Vagina (tissue), 2 donors: ENCODE measurements at regions of chr22 and their contacts with region 1.

Region 1: DNA sequence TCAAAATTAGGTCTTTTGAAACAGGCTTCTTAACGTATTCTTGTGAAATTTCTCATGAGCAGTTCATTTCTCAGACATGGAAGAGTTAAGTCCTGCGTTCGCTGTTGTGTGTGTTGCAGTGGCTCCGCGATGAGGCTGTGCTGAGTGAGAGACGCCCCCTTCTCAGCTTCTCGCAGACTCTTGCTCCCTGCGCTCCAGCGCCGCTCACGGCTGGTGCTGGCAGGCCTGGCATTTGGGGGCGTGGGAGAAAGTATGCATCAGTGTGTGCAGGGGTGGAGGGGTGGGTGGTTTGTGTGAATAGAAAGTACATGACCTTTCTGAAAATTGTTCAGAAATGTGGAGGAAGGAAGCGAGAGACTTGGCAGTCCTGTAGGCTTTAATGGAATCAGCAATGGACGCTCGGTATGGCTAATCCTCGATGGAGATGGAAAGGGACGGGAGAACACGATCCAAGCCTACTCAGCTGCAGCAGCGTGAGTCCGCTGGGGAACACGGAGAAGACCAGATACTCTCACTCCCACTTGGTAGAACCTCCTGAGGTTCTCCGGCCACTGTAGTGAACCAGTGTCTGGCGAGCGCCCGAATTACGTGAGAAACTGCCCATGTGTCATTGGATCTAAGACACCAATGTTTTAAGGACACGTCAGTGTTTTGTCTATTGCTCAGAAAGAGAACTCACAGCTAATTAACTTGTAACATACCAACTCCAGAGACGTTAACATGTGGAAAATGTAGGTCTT is 5.9 kb downstream of the TAB1 start:
- DNase-seq: no peak
- H3K4me3 ChIP-seq: peak overlapping the region; percentile 4 to 10
- H3K27ac ChIP-seq: peak overlapping the region; percentile 13
- H3K4me1 ChIP-seq: peaks cover 38% of the 10 kb centered on the region
- H3K27me3 ChIP-seq: no peaks in the 10 kb centered on the region
- CTCF ChIP-seq: no peak
- POLR2A ChIP-seq: no peak

Region 2: GRCh38 chr22:39520054-39520891 is 114.8 kb after region 1 on chr22 and contains the start of gene ATF4:
- intact Hi-C with region 1: loop called (anchors 10 kb)
- DNase-seq: peak in 1 of 2 donors; percentile 97
- H3K4me3 ChIP-seq: peak within 1 kb of the TSS; percentile 87 to 97
- H3K27ac ChIP-seq: peak within 1 kb of the TSS; percentile 99
- H3K4me1 ChIP-seq: peaks cover 52% of the 10 kb centered on the region
- H3K27me3 ChIP-seq: no peaks in the 10 kb centered on the region
- CTCF ChIP-seq: peak in 1 of 3 experiments; percentile 15
- POLR2A ChIP-seq: peak in 1 of 2 donors; percentile 97
- total RNA-seq, gene ATF4: 246 TPM